Spleen (tissue), 13 donors: ENCODE measurements at regions of chr10 and their contacts with region 1.

Region 1: DNA sequence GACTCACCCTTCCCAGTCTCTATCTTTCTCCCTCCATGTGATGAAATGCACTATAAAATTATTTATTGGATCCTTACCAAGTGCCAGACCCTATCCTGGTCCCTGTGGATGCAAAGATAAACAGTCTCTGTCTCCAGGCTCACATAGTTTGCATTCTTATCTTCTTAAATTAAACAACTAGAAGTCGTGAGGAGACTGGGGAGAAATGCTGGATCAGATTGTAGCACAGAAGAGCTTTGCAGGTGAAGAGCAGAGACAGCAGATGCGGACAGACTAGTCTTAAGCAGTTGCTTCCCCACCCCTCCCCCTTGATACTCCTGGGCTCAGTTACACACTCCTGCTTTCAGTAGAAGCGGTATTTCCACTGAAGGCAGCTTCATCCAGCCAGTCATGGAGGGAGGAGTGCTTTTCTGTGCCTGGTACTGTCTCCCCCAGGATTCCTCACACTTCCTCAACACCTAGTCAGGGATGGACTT is 20.8 kb upstream of the CDK1 start:
- DNase-seq: no peak
- H3K4me3 ChIP-seq: no peak overlapping the region
- H3K27ac ChIP-seq: no peak overlapping the region
- H3K4me1 ChIP-seq: no peaks in the 10 kb centered on the region
- H3K27me3 ChIP-seq: peaks cover 0 to 5% (median 0%) of the 10 kb centered on the region in 7 donors
- CTCF ChIP-seq: no peak
- POLR2A ChIP-seq: no peak

Region 2: GRCh38 chr10:60444494-60445064 is 312.9 kb before region 1 on chr10:
- intact Hi-C with region 1: loop called (anchors 10 kb)
- DNase-seq: no peak
- H3K4me3 ChIP-seq: no peak overlapping the region
- H3K27ac ChIP-seq: no peak overlapping the region
- H3K4me1 ChIP-seq: peaks cover 0 to 22% (median 15%) of the 10 kb centered on the region in 6 donors
- H3K27me3 ChIP-seq: no peaks in the 10 kb centered on the region
- CTCF ChIP-seq: peak in 8 of 11 experiments; percentile 23 to 56 (median 50)
- POLR2A ChIP-seq: no peak

Region 3: DNA sequence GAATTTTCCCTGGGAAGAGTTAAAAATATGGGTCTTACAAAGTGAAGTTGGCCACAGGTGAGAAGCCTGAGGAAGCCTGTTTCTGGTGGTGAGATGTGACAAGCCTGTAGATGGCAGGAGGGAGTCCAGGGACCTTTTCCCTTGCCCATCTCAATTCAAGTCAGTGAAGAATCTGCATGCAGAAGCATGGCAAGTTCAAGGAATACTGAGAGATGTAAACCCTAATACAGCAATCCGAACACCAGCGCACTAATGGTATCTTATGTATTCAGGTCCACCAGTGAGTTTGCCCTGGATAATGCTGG is 112.9 kb after region 1 on chr10:
- intact Hi-C with region 1: no loop called
- DNase-seq: no peak
- H3K4me3 ChIP-seq: no peak overlapping the region
- H3K27ac ChIP-seq: no peak overlapping the region
- H3K4me1 ChIP-seq: no peaks in the 10 kb centered on the region
- H3K27me3 ChIP-seq: no peaks in the 10 kb centered on the region
- CTCF ChIP-seq: no peak
- POLR2A ChIP-seq: no peak